ENCODE measurements at regions of chr6 and their contacts with region 1.

Region 1: DNA sequence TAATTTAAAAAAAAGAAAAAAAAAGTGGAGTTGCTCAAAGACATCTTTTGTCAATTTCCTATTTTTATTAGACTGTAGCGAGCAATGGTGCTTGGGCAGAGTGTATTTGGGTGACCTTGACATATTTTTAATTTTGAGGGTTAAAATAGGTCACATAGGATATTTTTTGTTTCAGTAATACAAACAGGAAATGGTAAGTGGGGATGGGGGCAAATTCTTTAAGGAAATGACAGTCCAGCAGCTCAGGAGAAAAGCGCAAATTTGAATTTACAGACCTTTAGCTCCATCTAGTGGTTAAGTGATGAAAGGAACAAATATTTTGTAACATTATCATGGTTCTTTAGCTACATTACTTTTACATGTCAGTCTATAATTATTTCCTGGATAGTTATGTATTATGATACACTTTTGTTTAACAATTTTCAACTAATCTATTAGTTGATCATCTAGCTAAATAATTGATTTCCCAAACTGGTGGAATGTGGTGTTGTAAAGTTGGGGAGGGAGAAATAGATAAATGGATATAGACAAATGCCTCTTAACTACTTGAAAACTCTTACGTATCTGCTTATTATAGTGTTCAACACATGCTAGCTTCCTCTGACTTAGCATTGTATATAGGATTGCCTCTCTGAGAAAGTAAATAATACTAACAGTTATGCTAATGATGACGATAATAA is 10.0 kb downstream of the CITED2 start:
- ATAC-seq: peak in 4 of 8 experiments; percentile 26 to 53 (median 33)
- H3K4me3 ChIP-seq: no peak overlapping the region
- H3K27ac ChIP-seq: no peak overlapping the region
- H3K4me1 ChIP-seq: peaks cover 18 to 19% of the 10 kb centered on the region in 2 donors

Region 2: DNA sequence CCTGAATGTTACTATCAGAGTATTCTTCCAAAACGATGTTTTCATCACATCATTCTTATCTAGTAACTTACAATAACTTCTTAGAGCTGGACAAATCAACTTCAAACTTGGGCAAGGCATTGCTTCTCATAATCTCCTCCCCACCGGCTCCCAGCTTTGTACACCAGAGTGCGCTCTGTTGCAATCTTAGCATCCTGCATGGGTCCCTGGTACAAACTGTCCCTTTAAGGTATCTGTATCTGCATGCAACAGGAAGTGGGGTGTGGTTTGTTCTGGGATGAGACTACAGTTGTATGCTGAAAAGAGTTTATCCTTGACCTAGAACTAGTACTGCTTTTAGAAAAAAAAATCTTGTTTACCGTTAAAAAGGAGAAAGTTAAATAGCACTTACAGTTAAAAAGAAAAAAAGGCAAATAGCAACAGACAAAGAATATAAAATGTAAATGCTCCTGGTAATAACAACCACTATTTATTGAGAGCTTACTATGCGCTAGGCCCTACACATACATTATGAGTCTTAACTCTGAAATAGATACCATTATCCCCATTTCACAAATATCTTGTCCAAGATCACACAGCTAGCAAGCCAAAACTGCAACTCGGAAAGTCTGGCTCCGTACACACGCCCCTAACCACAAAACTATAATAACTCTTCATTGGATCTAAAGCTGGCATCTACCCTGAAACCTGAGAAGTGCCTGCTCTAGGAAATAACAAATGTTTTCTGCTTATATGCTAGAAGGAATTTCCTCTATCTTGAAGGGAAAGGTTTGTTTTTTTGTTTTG is 239.4 kb before region 1 on chr6:
- in situ Hi-C with region 1: loop called in 1 of 9 experiments (anchors 10 kb)
- ATAC-seq: peak in 4 of 8 experiments; percentile 49 to 100 (median 98)
- H3K4me3 ChIP-seq: no peak overlapping the region
- H3K27ac ChIP-seq: no peak overlapping the region
- H3K4me1 ChIP-seq: no peaks in the 10 kb centered on the region

Region 3: DNA sequence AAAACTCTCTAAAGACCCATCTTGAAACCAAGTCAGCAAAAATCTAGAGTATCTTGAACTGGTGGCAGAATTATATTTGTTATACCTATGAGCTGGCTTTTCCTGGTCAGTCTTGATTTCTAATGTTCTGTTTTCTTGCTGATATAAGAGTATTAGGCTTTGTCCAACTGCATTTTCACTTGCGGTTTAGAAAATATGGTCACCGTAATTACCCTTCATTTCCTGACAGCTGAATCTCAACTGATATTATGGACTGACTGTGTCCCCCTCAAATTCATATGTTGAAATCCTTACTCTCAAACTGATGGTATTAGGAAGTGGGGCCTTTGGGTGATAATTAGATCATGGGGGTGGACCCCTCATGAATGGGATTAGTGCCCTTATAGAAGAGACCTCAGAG is 144.7 kb before region 1 on chr6:
- in situ Hi-C with region 1: loop called in 3 of 9 experiments (anchors 10 kb)
- ATAC-seq: no peak
- H3K4me3 ChIP-seq: no peak overlapping the region
- H3K27ac ChIP-seq: no peak overlapping the region
- H3K4me1 ChIP-seq: no peaks in the 10 kb centered on the region

Measured in motor neuron (in vitro differentiated cells).